Mammary epithelial cell (primary cell): ENCODE measurements at regions of chr1 and their contacts with region 1.

Region 1: DNA sequence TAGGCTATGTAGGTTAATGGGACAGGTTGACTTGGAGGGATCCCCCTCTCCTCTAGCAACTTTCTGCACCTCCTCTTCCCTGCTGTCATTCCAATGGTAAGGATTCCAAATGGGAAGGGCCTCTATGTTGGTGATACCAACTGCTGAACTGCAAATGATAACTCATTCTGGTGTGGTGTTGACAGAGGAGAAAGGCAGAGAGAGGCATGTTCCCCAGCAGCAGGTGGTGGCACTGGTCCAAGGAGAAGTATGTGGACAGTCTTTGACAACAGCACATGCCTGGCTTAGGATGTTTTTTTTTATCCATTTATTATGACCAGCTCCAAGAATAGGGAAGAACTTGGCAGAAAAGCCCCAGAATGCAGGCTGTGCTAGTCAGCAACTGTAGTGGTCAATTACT is 19.6 kb upstream of the SPAG17 start:
- DNase-seq: no peak
- H3K4me3 ChIP-seq: no peak overlapping the region
- H3K27ac ChIP-seq: no peak overlapping the region
- H3K4me1 ChIP-seq: peaks cover 20% of the 10 kb centered on the region
- H3K27me3 ChIP-seq: no peaks in the 10 kb centered on the region
- CTCF ChIP-seq: no peak

Region 2: GRCh38 chr1:118160806-118161205 is 43.8 kb before region 1 on chr1:
- CTCF ChIA-PET with region 1: no interaction called
- dilution Hi-C with region 1: no loop called
- in situ Hi-C with region 1: no loop called
- intact Hi-C with region 1: loop called (anchors 1 kb)
- DNase-seq: peak; percentile 47
- H3K4me3 ChIP-seq: no peak overlapping the region
- H3K27ac ChIP-seq: no peak overlapping the region
- H3K4me1 ChIP-seq: peaks cover 6% of the 10 kb centered on the region
- H3K27me3 ChIP-seq: no peaks in the 10 kb centered on the region
- CTCF ChIP-seq: no peak

Region 3: DNA sequence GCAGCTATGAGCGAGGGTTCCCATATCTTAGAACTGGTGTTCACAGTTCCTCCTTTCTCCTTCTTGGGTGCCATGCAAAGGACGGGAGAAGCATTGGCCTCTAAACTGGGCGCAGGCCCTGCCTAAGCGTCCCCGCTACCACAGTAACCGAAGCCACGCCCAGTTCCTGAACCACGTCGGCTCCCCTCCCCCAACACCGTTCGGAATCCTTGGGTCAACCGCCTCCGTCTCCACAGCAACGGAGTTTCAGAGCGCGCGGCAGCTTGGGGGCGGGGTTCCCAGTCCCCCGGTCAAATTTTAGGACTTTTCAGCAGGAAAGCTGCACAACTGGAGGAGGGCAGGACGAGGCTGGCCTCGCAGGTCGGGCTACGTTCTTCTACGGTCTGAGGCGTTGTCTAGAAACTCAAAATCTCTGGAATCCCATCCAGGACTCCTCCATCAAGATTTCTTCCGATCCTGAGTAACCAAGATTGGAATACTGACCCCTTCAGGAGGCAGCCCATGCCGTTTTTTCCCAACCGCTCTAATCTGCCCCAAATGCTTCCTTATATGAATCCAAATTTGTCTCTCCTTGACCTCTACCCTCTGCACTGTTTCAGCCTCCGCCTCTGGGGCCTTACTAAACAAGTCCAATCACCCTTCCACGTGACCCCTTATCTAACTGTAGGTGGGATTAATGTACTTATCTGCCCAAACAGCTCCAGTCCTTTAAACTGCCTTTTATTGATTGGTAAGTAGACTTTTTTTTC is 19.4 kb before region 1 on chr1 and contains the start of gene SPAG17:
- CTCF ChIA-PET with region 1: no interaction called
- dilution Hi-C with region 1: no loop called
- in situ Hi-C with region 1: no loop called
- intact Hi-C with region 1: loop called (anchors 2 kb)
- DNase-seq: peak; percentile 5
- H3K4me3 ChIP-seq: peak within 1 kb of the TSS; percentile 32 to 43 (median 41)
- H3K27ac ChIP-seq: no peak within 1 kb of the TSS
- H3K4me1 ChIP-seq: peaks cover 6% of the 10 kb centered on the region
- H3K27me3 ChIP-seq: no peaks in the 10 kb centered on the region
- CTCF ChIP-seq: peak in 1 of 2 donors; percentile 22
- total RNA-seq, gene SPAG17: 0.33 TPM in 1 of 2 donors, not detected in the other

Region 4: GRCh38 chr1:118333601-118334210 is 129.1 kb after region 1 on chr1:
- CTCF ChIA-PET with region 1: no interaction called
- dilution Hi-C with region 1: no loop called
- in situ Hi-C with region 1: no loop called
- intact Hi-C with region 1: no loop called
- DNase-seq: no peak
- H3K4me3 ChIP-seq: no peak overlapping the region
- H3K27ac ChIP-seq: no peak overlapping the region
- H3K4me1 ChIP-seq: peaks cover 35% of the 10 kb centered on the region
- H3K27me3 ChIP-seq: no peaks in the 10 kb centered on the region
- CTCF ChIP-seq: no peak